ENCODE measurements at regions of chr1 and their contacts with region 1.

Region 1: DNA sequence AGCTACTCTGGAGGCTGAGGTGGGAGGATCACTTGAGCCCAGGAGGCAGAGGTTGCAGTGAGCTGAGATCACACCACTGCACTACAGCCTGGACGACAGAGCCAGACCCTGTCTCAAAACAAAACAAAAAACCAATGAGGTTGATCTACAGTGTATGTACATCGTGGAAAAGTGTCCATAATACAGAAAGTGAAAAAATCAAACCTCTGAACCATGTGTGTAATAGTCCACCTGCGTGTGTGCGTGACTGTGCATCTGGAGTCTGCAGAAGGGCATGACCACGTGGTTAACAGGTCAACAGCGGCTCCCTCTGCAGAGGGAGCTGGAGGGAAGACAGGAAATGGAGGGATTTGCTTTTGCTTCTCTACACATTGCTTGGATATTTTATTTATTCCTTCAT is 32.4 kb upstream of the ENO1 start:
- DNase-seq: no peak
- ATAC-seq: no peak

Region 2: GRCh38 chr1:8962812-8963530 is 52.1 kb after region 1 on chr1:
- intact Hi-C with region 1: no loop called
- DNase-seq: peak; percentile 32 to 61
- ATAC-seq: peak; percentile 84

Region 3: DNA sequence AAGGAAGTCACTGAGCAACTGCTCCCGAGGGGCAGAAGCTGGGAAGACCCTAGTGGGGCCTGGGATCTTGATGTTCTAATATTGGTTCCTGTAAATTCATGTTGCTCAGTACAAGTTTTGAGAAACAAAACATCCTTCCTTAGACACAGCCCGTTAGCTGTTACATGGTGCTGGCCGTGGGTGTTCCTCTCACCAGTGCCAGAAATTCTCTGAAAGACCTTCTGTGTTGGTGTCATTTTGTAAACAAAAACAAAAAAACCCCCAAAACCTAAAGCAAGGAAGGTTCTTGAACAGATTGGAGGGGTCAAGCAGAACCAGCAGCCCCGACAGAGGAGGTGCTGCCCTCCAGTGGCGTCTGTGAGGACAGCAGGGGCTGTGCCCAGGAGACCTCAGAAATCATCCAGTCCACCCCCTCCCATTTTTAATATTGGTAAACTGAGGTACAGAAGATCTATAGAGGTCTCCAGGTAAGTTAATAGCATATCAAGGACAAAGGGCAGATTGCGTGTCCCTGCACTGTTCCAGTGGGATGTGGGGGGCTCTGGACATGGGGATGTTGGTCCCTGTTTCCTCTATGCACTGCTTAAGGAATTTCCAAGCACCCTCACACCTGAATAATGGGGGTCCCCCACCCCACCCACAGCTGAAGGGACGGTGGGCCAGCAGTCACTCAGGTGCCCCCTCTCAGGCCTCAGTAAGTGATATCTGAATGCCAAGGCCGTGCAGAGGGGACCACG is 77.1 kb after region 1 on chr1:
- intact Hi-C with region 1: loop called in 1 of 2 experiments (anchors 5 kb)
- DNase-seq: peak in 1 of 2 donors; percentile 60
- ATAC-seq: peak; percentile 49

Region 4: DNA sequence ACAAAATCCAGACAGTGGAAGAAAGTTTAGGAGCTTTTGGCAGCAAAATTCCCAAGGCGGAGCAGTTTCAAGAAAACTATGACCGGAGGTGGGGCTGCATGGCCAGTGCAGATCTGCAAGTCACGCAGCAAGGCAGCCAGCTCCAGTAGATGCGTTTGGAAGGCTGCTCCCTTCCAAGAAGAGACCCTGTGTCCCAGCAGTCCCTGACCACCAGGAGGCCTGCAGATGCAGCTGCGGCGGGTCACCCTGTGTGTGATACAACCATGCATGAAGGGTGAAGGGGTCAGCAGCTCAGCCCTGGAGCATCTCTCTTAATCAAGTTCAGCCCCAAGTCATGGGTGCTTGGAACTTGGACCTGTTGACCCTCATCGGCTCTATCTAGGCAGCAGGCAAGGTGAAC is 188.6 kb after region 1 on chr1:
- intact Hi-C with region 1: loop called in 1 of 2 experiments (anchors 10 kb)
- DNase-seq: no peak
- ATAC-seq: no peak

Measured in left colon (tissue), 2 donors.